Spleen (tissue), 13 donors: ENCODE measurements at regions of chr14 and their contacts with region 1.

Region 1: DNA sequence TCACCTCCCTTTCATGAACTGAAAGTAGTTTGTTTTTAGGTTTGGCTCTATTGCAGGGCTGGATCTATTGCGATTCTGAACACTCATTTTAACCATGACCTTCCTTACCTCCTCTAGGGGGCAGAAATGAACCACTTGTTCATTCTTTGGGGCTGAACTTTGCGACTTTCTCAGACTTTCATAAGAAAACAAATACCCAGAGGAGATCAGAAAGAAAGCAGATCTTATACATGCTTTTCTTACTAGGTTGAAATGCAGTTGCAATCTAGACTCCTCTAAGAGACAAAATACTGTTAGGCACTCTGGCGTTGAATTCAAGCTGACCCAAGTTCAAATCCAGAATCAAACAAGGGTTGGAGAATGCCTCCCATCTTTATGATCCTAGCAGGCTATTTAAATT is 32.6 kb upstream of the PLEKHG3 start:
- DNase-seq: no peak
- H3K4me3 ChIP-seq: no peak overlapping the region
- H3K27ac ChIP-seq: peak overlapping the region in 1 of 8 donors; percentile 86
- H3K4me1 ChIP-seq: peaks cover 0 to 53% (median 22%) of the 10 kb centered on the region in 6 donors
- H3K27me3 ChIP-seq: no peaks in the 10 kb centered on the region
- CTCF ChIP-seq: peak; percentile 40 to 82 (median 65)
- POLR2A ChIP-seq: no peak

Region 2: GRCh38 chr14:64503478-64504309 is 167.9 kb before region 1 on chr14 and contains the start of gene ZBTB25:
- intact Hi-C with region 1: no loop called
- DNase-seq: peak; percentile 99
- H3K4me3 ChIP-seq: peak within 1 kb of the TSS; percentile 55 to 88 (median 80)
- H3K27ac ChIP-seq: peak within 1 kb of the TSS; percentile 99 to 100 (median 99)
- H3K4me1 ChIP-seq: peaks cover 42 to 80% (median 68%) of the 10 kb centered on the region in 6 donors
- H3K27me3 ChIP-seq: no peaks in the 10 kb centered on the region
- CTCF ChIP-seq: no peak
- POLR2A ChIP-seq: peak; percentile 50 to 84 (median 53)
- total RNA-seq, gene ZBTB25: 14.7 to 27.5 (median 21.3) TPM

Region 3: DNA sequence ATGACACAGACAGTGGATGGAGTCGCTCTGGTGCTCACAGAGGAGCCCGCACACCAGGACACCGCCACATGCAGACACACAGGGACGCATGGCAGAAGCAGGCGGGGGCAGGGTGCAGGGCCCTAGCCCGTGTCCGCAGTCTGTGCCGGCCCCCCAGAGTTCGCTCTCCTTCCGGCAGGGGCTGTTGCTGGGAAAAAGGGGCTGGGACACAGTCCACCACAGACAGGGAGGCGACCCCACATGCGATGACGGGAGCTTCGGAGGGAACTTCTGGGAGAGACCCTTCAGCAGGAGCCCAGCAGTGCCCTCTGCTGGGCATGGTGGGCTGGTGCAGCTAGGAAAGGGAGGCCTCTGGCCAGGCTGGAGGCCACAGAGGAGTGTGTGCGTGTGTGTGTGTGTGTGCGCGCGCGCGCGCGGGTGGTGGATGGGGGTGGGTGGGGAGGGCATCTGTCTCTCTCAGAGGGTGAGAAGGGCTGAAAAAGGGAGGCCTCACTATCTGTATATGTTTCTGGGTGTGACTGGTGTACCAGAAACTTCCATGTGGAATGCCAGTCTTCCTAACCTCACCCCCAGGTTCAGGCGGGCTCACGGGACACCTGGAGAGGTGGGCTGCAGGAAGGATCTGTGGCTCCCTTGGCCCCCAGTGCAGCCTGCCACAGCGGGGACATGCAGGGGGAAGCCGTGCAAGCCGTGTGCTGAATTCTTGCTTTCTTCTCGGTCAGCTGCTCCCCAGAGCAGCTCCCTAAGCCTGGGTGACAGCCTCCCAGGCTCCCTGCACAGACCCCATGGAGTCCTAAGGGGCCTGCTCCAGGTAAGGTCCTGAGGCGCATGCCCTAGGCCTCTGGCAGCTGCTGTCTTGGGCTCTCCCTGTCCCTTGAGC is 93.3 kb after region 1 on chr14:
- intact Hi-C with region 1: loop called (anchors 2 kb)
- DNase-seq: peak; percentile 92
- H3K4me3 ChIP-seq: peak overlapping the region in 5 of 8 donors; percentile 14 to 58 (median 26)
- H3K27ac ChIP-seq: peak overlapping the region; percentile 14 to 76 (median 58)
- H3K4me1 ChIP-seq: peaks cover 19 to 54% (median 47%) of the 10 kb centered on the region in 6 donors
- H3K27me3 ChIP-seq: peaks cover 0 to 21% (median 0%) of the 10 kb centered on the region in 7 donors
- CTCF ChIP-seq: peak; percentile 84 to 96 (median 92)
- POLR2A ChIP-seq: no peak